OCI-LY7 (cell line): ENCODE measurements at regions of chr3 and their contacts with region 1.

Region 1: GRCh38 chr3:172106989-172107388 is 67.6 kb downstream of the FNDC3B start:
- DNase-seq: peak; percentile 92
- H3K4me3 ChIP-seq: peak overlapping the region; percentile 48
- H3K27ac ChIP-seq: peak overlapping the region; percentile 71
- H3K4me1 ChIP-seq: peaks cover 68% of the 10 kb centered on the region
- CTCF ChIP-seq: no peak

Region 2: DNA sequence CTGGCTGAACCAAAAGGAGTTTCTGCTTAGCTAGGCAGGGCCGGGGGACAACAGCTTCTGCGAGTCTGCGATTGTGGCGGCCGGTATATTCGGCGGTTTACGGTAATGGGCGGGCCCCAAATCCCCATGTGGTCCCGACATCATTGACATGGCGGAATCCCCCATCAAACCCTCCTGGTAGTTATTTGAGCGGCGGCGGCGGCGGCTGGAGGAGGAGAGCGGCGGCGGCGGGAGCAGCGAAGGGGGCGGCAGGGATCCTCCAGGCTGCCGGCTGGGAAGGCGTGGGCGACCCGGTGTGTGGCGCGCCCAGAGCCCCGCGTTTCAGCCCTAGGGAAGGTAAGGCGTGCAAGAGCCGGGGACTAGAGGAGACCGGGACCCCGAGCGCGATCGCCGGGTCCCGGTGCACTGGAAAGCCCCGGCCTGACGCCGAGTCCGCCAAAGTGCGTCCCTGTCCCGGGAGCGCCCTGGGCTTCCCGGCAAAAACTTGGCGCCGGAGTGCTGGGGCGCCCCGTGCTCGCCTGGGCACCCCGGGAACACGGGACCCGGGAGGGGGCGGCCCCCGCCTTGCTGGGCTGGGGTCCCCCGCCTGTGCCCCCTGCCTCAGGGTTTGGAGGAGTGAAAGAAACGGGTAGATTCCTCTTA is 67.4 kb before region 1 on chr3 and contains the start of gene FNDC3B:
- CTCF ChIA-PET with region 1: interaction called, 4 read pairs
- POLR2A ChIA-PET with region 1: interaction called, 29 read pairs
- intact Hi-C with region 1: loop called (anchors 1 kb)
- DNase-seq: peak; percentile 95
- H3K4me3 ChIP-seq: peak within 1 kb of the TSS; percentile 98
- H3K27ac ChIP-seq: peak within 1 kb of the TSS; percentile 21
- H3K4me1 ChIP-seq: peaks cover 24% of the 10 kb centered on the region
- CTCF ChIP-seq: no peak
- total RNA-seq, gene FNDC3B: 17.3 and 23.3 TPM in 2 replicates

Region 3: GRCh38 chr3:172054115-172054764 is 52.7 kb before region 1 on chr3:
- CTCF ChIA-PET with region 1: no interaction called
- POLR2A ChIA-PET with region 1: interaction called, 10 read pairs
- intact Hi-C with region 1: no loop called
- DNase-seq: no peak
- H3K4me3 ChIP-seq: no peak overlapping the region
- H3K27ac ChIP-seq: no peak overlapping the region
- H3K4me1 ChIP-seq: peaks cover 26% of the 10 kb centered on the region
- CTCF ChIP-seq: no peak

Region 4: GRCh38 chr3:172087602-172088580 is 19.1 kb before region 1 on chr3:
- CTCF ChIA-PET with region 1: interaction called, 3 read pairs
- POLR2A ChIA-PET with region 1: interaction called, 16 read pairs
- intact Hi-C with region 1: no loop called
- DNase-seq: peak; percentile 29
- H3K4me3 ChIP-seq: no peak overlapping the region
- H3K27ac ChIP-seq: no peak overlapping the region
- H3K4me1 ChIP-seq: peaks cover 23% of the 10 kb centered on the region
- CTCF ChIP-seq: no peak

Region 5: GRCh38 chr3:172270557-172271166 is 163.7 kb after region 1 on chr3:
- CTCF ChIA-PET with region 1: no interaction called
- POLR2A ChIA-PET with region 1: no interaction called
- intact Hi-C with region 1: loop called (anchors 5 kb)
- DNase-seq: peak; percentile 67
- H3K4me3 ChIP-seq: no peak overlapping the region
- H3K27ac ChIP-seq: no peak overlapping the region
- H3K4me1 ChIP-seq: peaks cover 16% of the 10 kb centered on the region
- CTCF ChIP-seq: no peak